Esophagus squamous epithelium (tissue), 5 donors: ENCODE measurements at regions of chr1 and their contacts with region 1.

Region 1: GRCh38 chr1:54488779-54489626 is 59.0 kb upstream of the ACOT11 start:
- DNase-seq: no peak
- H3K4me3 ChIP-seq: peak overlapping the region; percentile 48 to 86 (median 67)
- H3K27ac ChIP-seq: peak overlapping the region; percentile 86 to 97 (median 92)
- H3K4me1 ChIP-seq: peaks cover 5 to 54% (median 25%) of the 10 kb centered on the region in 3 donors
- H3K27me3 ChIP-seq: peaks cover 0 to 4% (median 0%) of the 10 kb centered on the region in 4 donors
- CTCF ChIP-seq: peak; percentile 96 to 98 (median 97)
- POLR2A ChIP-seq: peak in 1 of 4 donors; percentile 19

Region 2: GRCh38 chr1:54070171-54070837 is 418.7 kb before region 1 on chr1:
- intact Hi-C with region 1: loop called (anchors 5 kb)
- DNase-seq: no peak
- H3K4me3 ChIP-seq: no peak overlapping the region
- H3K27ac ChIP-seq: no peak overlapping the region
- H3K4me1 ChIP-seq: no peaks in the 10 kb centered on the region
- H3K27me3 ChIP-seq: no peaks in the 10 kb centered on the region
- CTCF ChIP-seq: peak in 5 of 6 experiments; percentile 59 to 74 (median 64)
- POLR2A ChIP-seq: no peak

Region 3: DNA sequence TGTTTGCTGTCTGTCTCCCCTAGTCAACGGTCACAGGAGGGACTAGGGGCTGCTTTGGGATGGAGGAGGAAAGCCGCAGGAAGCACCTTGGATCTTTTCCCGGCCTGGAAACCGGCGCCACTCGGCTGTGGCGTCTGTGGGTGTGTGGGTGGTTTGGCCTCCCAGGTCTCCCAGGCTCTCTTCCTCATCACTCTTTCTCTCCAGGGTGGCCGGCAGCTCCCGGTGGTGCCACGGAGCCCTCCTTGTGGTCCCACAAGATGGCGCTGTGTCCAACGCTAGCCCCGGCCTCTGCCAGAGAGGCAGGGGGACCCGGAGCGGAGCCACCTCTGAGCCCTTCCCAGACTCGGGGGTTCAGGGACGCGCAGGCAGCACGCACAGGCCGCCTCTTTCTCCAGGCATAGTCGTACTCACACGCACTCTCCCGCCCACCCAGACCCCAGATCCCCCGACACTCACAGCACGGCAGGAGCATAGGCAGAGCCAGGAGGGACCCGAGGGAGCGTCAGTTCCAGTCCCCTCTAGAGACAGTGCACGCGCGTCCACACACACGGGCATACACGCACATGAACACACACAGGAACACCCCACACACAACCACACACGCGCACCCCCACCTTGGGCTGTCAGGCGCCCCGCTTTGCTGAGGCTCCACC is 367.4 kb before region 1 on chr1:
- intact Hi-C with region 1: loop called (anchors 5 kb)
- DNase-seq: no peak
- H3K4me3 ChIP-seq: peak overlapping the region in 2 of 4 donors; percentile 11 to 52
- H3K27ac ChIP-seq: no peak overlapping the region
- H3K4me1 ChIP-seq: peaks cover 6 to 17% (median 11%) of the 10 kb centered on the region in 3 donors
- H3K27me3 ChIP-seq: peaks cover 0 to 13% (median 0%) of the 10 kb centered on the region in 4 donors
- CTCF ChIP-seq: peak; percentile 26 to 75 (median 65)
- POLR2A ChIP-seq: no peak

Region 4: GRCh38 chr1:54180701-54181360 is 308.2 kb before region 1 on chr1:
- intact Hi-C with region 1: loop called (anchors 10 kb)
- DNase-seq: no peak
- H3K4me3 ChIP-seq: no peak overlapping the region
- H3K27ac ChIP-seq: no peak overlapping the region
- H3K4me1 ChIP-seq: no peaks in the 10 kb centered on the region
- H3K27me3 ChIP-seq: no peaks in the 10 kb centered on the region
- CTCF ChIP-seq: no peak
- POLR2A ChIP-seq: no peak

Region 5: DNA sequence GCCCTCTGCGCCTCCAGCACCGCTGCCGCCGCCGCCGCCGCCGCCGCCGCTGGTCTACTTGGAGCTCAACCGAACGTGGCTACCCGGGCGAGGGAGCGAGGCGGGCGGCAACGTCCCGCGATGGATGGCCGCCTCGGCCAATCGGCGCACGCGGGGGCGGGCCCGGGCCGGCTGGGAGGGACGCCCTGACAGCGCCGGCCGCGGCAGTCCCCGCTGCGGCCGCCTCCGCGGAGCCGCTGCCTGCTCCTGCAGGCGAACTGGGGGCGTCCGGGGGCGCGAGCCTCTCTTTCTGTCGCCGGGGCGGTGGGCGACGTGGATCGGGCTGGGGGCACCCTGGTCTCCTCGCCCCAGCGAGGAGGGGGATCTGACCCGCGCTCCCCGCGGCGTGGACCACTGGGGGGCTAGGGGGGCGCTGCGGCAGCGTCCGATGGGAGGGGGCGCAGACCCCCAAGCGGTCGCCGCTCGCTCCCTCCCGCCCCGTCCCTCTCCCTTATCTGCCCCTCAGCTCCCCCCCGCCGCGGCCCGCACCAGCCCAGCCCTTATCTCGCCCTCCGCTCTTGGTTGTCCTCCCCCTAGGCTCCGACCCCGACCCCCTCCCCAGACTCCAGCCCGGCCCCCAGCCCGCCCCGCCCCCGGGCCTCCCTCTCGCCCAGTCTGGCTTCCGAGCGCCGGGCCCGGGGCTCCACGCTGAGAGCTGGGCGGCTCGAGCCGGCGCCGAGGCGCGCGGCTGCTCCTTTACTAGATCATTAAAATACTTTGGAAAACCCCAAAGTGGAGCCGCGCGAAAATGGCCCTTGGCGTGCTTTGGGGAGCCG is 82.5 kb before region 1 on chr1 and contains the start of gene SSBP3:
- intact Hi-C with region 1: loop called (anchors 2 kb)
- DNase-seq: peak; percentile 45
- H3K4me3 ChIP-seq: peak within 1 kb of the TSS; percentile 71 to 98 (median 82)
- H3K27ac ChIP-seq: peak within 1 kb of the TSS; percentile 88 to 97 (median 95)
- H3K4me1 ChIP-seq: peaks cover 35 to 69% (median 38%) of the 10 kb centered on the region in 3 donors
- H3K27me3 ChIP-seq: no peaks in the 10 kb centered on the region
- CTCF ChIP-seq: peak in 2 of 6 experiments; percentile 19 to 25
- POLR2A ChIP-seq: peak in 3 of 4 donors; percentile 11 to 91 (median 90)
- total RNA-seq, gene SSBP3: 17.1 to 25.4 (median 21.5) TPM